ENCODE measurements at regions of chr2 and their contacts with region 1.

Region 1: GRCh38 chr2:64918220-64918886 is 70.8 kb upstream of the SLC1A4 start:
- DNase-seq: peak in 1 of 2 donors; percentile 84
- H3K4me3 ChIP-seq: no peak overlapping the region
- CTCF ChIP-seq: no peak
- POLR2A ChIP-seq: no peak

Region 2: GRCh38 chr2:65037178-65037577 is 118.8 kb after region 1 on chr2:
- intact Hi-C with region 1: loop called (anchors 2 kb)
- DNase-seq: peak in 1 of 2 donors; percentile 50
- H3K4me3 ChIP-seq: no peak overlapping the region
- CTCF ChIP-seq: no peak
- POLR2A ChIP-seq: no peak